Heart right ventricle (tissue), 16 donors: ENCODE measurements at regions of chr14 and their contacts with region 1.

Region 1: DNA sequence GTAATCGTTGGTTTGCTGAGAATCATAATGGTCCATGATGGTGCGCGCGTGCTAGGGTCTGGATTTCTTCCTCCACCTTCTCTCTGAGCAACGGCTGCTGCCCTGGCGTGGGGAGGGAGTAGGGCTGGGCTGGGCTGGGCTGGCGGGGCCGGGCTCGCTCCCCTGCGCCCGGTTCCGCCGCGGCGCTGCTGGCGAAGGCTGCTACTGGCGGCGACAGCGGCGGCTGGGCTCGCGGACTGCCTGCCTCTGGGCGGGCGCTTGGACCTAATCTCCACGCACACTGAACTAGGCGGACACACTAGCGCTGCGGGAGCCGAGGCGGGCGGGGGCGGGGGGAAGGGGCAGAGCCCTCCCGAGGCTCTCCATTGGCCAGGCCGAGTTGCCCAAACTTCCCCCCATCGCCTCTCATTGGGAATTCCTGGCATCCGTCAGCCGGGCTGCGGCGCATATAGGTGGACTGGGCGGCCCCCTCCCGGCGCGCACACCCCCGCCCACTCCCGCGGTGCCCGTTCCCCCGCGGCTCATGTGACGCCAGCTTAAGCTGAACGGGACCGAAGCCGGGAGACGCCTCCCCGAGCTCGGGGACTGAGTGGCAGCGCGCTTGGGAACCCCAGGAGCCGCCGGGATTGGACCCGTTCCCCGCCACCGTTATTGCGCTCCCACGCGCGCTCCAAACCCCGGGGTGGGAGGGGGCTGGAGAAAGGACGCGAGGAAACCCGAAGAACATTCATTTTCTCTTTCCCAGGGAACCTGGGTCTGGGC is at the start of gene ACTN1:
- DNase-seq: peak; percentile 89 to 94
- ATAC-seq: peak; percentile 79 to 89 (median 85)
- H3K4me3 ChIP-seq: peak within 1 kb of the TSS; percentile 78 to 100 (median 96)
- H3K27ac ChIP-seq: peak within 1 kb of the TSS; percentile 81 to 99 (median 96)
- H3K4me1 ChIP-seq: peaks cover 14 to 53% (median 40%) of the 10 kb centered on the region in 9 donors
- H3K27me3 ChIP-seq: no peaks in the 10 kb centered on the region
- CTCF ChIP-seq: peak in 1 of 9 donors; percentile 14
- total RNA-seq, gene ACTN1: 82.5 to 235 (median 112) TPM

Region 2: GRCh38 chr14:67999693-68000384 is 979.4 kb before region 1 on chr14:
- intact Hi-C with region 1: no loop called
- DNase-seq: no peak
- ATAC-seq: no peak
- H3K4me3 ChIP-seq: no peak overlapping the region
- H3K27ac ChIP-seq: peak overlapping the region in 4 of 10 donors; percentile 3 to 41 (median 37)
- H3K4me1 ChIP-seq: peaks cover 0 to 6% (median 0%) of the 10 kb centered on the region in 9 donors
- H3K27me3 ChIP-seq: no peaks in the 10 kb centered on the region
- CTCF ChIP-seq: no peak

Region 3: DNA sequence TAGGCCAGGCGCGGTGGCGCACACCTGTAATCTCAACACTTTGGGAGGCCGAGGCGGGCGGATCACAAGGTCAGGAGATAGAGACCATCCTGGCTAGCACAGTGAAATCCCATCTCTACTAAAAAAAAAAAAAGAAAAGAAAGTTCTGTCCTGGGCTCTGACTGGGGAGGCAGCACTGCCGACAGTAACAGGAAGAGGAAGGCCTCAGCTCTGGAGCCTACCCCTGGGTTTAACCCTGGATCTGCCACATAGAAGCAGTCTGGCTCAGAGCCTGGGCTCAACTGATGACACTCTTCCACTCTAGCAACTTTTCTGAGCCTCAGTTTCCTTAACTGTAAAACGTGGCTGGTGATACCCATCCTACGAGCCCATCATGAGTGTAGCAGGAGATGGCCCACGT is 60.6 kb before region 1 on chr14:
- intact Hi-C with region 1: loop called in 7 of 10 experiments (anchors 5 kb)
- DNase-seq: no peak
- ATAC-seq: no peak
- H3K4me3 ChIP-seq: no peak overlapping the region
- H3K27ac ChIP-seq: no peak overlapping the region
- H3K4me1 ChIP-seq: peaks cover 13 to 49% (median 29%) of the 10 kb centered on the region in 9 donors
- H3K27me3 ChIP-seq: no peaks in the 10 kb centered on the region
- CTCF ChIP-seq: no peak

Region 4: GRCh38 chr14:68939893-68940613 is 39.1 kb before region 1 on chr14:
- intact Hi-C with region 1: loop called in 7 of 10 experiments (anchors 2 to 5 kb)
- DNase-seq: peak; percentile 74 to 90
- ATAC-seq: peak; percentile 57 to 80 (median 75)
- H3K4me3 ChIP-seq: peak overlapping the region in 1 of 10 donors; percentile 2
- H3K27ac ChIP-seq: peak overlapping the region; percentile 65 to 94 (median 90)
- H3K4me1 ChIP-seq: peaks cover 74 to 100% (median 98%) of the 10 kb centered on the region in 9 donors
- H3K27me3 ChIP-seq: no peaks in the 10 kb centered on the region
- CTCF ChIP-seq: peak in 2 of 9 donors; percentile 6 to 15

Region 5: DNA sequence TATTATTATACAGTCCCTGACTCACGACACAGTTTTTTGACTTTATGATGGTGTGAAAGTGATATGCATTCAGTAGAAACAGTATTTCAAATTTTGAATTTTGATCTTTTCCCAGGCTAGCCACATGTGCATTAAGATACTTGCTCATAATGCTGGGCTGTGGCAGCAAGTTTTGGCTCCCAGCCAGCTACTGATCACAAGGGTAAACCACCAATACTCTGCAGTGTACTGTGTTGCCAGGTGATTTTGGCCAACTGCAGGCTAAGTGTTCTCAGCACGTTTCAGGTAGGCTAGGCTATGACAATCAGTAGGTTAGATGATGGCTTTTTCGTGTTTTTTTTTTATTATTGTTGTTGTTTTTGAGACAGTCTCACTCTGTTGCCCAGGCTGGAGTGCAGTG is 69.3 kb after region 1 on chr14:
- intact Hi-C with region 1: loop called in 2 of 10 experiments (anchors 5 kb)
- DNase-seq: no peak
- ATAC-seq: no peak
- H3K4me3 ChIP-seq: no peak overlapping the region
- H3K27ac ChIP-seq: peak overlapping the region in 8 of 10 donors; percentile 18 to 94 (median 82)
- H3K4me1 ChIP-seq: peaks cover 53 to 100% (median 94%) of the 10 kb centered on the region in 9 donors
- H3K27me3 ChIP-seq: no peaks in the 10 kb centered on the region
- CTCF ChIP-seq: no peak

Region 6: GRCh38 chr14:69105326-69105725 is 126.1 kb after region 1 on chr14:
- intact Hi-C with region 1: no loop called
- DNase-seq: no peak
- ATAC-seq: no peak
- H3K4me3 ChIP-seq: no peak overlapping the region
- H3K27ac ChIP-seq: no peak overlapping the region
- H3K4me1 ChIP-seq: peaks cover 0 to 10% (median 0%) of the 10 kb centered on the region in 9 donors
- H3K27me3 ChIP-seq: no peaks in the 10 kb centered on the region
- CTCF ChIP-seq: no peak

Region 7: GRCh38 chr14:69325646-69326265 is 346.6 kb after region 1 on chr14:
- intact Hi-C with region 1: no loop called
- DNase-seq: no peak
- ATAC-seq: no peak
- H3K4me3 ChIP-seq: no peak overlapping the region
- H3K27ac ChIP-seq: no peak overlapping the region
- H3K4me1 ChIP-seq: no peaks in the 10 kb centered on the region
- H3K27me3 ChIP-seq: no peaks in the 10 kb centered on the region
- CTCF ChIP-seq: peak in 2 of 9 donors; percentile 17 to 18

Region 8: DNA sequence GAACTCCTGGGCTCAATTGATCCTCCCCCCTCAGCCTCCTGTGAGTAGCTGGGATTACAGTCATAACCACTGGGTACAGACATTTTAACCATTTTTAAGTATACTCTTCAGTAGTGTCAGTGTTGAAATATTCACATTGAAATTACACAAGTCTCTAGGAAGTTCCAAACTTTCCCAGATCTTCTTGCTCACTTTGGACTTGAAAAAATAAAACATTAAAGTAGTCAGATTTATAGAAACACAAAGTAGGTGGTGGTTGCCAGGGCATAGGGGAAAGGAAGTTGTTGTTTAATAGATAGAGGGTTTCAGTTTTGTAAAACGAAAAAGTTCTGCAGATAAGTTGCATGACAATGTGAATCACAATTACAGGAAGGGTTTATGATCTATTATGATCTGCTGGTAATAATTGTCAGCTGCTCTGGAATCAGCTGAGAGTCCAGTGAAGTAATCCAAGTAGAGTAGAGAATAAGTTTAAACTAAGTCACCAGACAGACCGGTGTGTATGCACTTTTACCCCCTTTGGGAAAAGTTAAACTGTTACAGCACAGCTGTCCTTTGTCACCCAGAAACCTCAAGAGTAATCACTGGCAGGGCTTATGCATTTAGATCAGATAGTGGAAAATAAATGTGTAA is 1955.4 kb after region 1 on chr14:
- intact Hi-C with region 1: no loop called
- DNase-seq: no peak
- ATAC-seq: peak in 6 of 8 donors; percentile 37 to 73 (median 42)
- H3K4me3 ChIP-seq: no peak overlapping the region
- H3K27ac ChIP-seq: peak overlapping the region in 2 of 10 donors; percentile 9 to 70
- H3K4me1 ChIP-seq: peaks cover 3 to 55% (median 42%) of the 10 kb centered on the region in 9 donors
- H3K27me3 ChIP-seq: no peaks in the 10 kb centered on the region
- CTCF ChIP-seq: no peak